Dendritic cell treated with granulocyte-macrophage colony-stimulating factor and Interleukin-4, amounts not matched to agents 40 ng/mL and 50 ng/mL, for 4 days (primary cell): ENCODE measurements at regions of chr17 and their contacts with region 1.

Region 1: GRCh38 chr17:45172454-45173286 is 11.0 kb downstream of the HEXIM2 start:
- H3K4me3 Mint-ChIP-seq: peak overlapping the region; percentile 75
- H3K27ac Mint-ChIP-seq: peak overlapping the region; percentile 93
- H3K4me1 Mint-ChIP-seq: peaks cover 57% of the 10 kb centered on the region
- H3K27me3 Mint-ChIP-seq: no peaks in the 10 kb centered on the region

Region 2: GRCh38 chr17:45161019-45161825 is 11.4 kb before region 1 on chr17:
- intact Hi-C with region 1: loop called (anchors 1 kb)
- H3K4me3 Mint-ChIP-seq: peak overlapping the region; percentile 99
- H3K27ac Mint-ChIP-seq: peak overlapping the region; percentile 97
- H3K4me1 Mint-ChIP-seq: peaks cover 55% of the 10 kb centered on the region
- H3K27me3 Mint-ChIP-seq: no peaks in the 10 kb centered on the region